ENCODE measurements at regions of chr1 and their contacts with region 1.

Region 1: GRCh38 chr1:165697881-165698760 is at the start of gene ALDH9A1:
- DNase-seq: peak; percentile 90
- H3K4me3 Mint-ChIP-seq: peak within 1 kb of the TSS; percentile 97
- H3K27ac Mint-ChIP-seq: peak within 1 kb of the TSS; percentile 80
- H3K4me1 Mint-ChIP-seq: peaks cover 11% of the 10 kb centered on the region
- H3K27me3 Mint-ChIP-seq: no peaks in the 10 kb centered on the region
- CTCF ChIP-seq: peak; percentile 40
- total RNA-seq, gene ALDH9A1: 56.3 and 67.1 TPM in 2 replicates

Region 2: GRCh38 chr1:164155347-164155746 is 1542.8 kb before region 1 on chr1:
- CTCF ChIA-PET with region 1: no interaction called
- POLR2A ChIA-PET with region 1: no interaction called
- intact Hi-C with region 1: no loop called
- DNase-seq: peak; percentile 19
- H3K4me3 Mint-ChIP-seq: no peak overlapping the region
- H3K27ac Mint-ChIP-seq: no peak overlapping the region
- H3K4me1 Mint-ChIP-seq: no peaks in the 10 kb centered on the region
- H3K27me3 Mint-ChIP-seq: no peaks in the 10 kb centered on the region
- CTCF ChIP-seq: no peak

Region 3: DNA sequence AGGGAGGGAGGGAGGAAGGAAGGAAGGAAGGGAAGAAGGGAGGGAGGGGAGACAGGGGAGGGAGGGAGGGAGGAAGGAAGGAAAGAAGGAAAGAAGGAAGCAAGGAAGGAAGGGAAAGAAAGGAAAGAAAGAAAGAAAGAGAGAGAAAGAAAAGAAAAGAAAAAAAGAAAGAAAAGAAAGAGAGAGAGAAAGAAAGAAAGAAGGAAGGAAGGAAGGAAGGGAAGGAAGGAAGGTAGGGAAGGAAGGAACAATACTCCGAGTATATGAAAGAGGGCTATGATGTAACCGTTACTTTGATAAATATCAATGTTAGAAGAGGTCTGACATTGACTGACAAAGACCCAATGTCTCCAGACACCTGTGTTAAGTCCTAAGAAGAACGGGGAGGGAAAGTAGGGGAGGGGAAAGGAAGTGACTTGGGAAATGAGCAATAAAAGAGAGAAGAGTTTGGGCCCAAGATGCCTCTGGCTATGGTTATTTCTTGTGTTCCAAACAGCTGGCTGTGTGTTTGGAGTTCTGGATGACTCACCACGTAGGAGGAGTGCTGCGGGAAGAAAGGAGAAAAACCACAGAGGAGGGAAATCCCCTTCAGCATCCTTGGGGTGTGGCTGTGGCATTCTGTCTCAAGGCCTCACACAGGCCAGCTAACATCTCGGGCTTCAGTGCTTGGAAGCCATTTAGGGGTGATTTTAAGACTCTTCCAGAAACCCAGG is 216.1 kb before region 1 on chr1:
- CTCF ChIA-PET with region 1: no interaction called
- POLR2A ChIA-PET with region 1: no interaction called
- intact Hi-C with region 1: loop called (anchors 5 kb)
- DNase-seq: peak; percentile 99
- H3K4me3 Mint-ChIP-seq: no peak overlapping the region
- H3K27ac Mint-ChIP-seq: peak overlapping the region; percentile 7
- H3K4me1 Mint-ChIP-seq: peaks cover 14% of the 10 kb centered on the region
- H3K27me3 Mint-ChIP-seq: peaks cover 43% of the 10 kb centered on the region
- CTCF ChIP-seq: no peak

Region 4: DNA sequence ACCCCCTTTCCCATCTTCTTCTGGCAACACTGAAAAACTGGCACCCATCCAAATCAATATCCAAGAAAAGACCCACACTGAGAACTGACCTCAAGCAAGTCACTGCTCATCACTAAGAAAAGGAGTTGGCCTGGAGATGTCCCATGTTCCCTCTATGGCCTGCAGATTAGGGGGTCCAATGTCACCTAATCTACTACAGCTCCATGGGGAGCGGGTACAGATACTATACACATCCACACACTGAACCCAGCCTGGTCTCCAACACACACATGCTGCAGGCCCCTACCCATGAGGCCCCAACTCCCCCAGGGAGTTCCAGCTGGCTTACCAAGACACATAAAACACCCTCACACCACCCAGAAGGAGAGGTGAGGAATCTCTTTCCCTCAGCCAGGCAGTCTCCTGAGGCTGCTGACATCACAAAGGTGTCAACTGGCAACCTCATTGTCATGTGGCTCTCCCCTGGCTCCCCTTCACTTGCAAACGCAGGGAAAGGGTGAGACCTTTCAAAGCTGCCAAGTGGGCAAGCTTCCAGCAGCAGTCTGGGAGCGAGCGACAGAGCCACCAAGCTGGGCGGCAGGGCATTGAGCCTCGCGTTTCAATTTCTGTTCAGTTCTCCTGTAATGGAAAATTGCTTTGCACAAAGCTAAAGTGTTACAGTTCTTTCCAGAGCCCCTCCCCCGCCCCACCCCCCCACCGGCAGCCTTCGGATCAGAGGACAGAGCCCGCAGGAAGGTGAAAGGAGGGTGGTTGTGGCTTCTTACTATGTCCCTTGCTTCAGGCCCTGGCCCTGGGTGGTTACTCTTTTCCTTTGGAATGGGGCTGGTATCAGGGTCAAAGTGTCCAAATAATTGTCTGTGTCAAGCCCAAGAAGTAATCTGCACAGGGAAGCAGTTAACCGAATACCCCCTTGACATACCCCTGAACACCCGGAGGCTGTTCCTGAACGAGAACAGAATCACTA is 154.3 kb before region 1 on chr1 and contains the start of gene LRRC52:
- CTCF ChIA-PET with region 1: no interaction called
- POLR2A ChIA-PET with region 1: no interaction called
- intact Hi-C with region 1: no loop called
- DNase-seq: peak; percentile 31
- H3K4me3 Mint-ChIP-seq: no peak within 1 kb of the TSS
- H3K27ac Mint-ChIP-seq: no peak within 1 kb of the TSS
- H3K4me1 Mint-ChIP-seq: no peaks in the 10 kb centered on the region
- H3K27me3 Mint-ChIP-seq: peaks cover 41% of the 10 kb centered on the region
- CTCF ChIP-seq: no peak
- total RNA-seq, gene LRRC52: not detected in 2 replicates

Region 5: GRCh38 chr1:165637427-165637826 is 60.7 kb before region 1 on chr1:
- CTCF ChIA-PET with region 1: interaction called, 14 read pairs
- POLR2A ChIA-PET with region 1: interaction called, 128 read pairs
- intact Hi-C with region 1: no loop called
- DNase-seq: peak; percentile 80
- H3K4me3 Mint-ChIP-seq: no peak overlapping the region
- H3K27ac Mint-ChIP-seq: peak overlapping the region; percentile 78
- H3K4me1 Mint-ChIP-seq: peaks cover 37% of the 10 kb centered on the region
- H3K27me3 Mint-ChIP-seq: no peaks in the 10 kb centered on the region
- CTCF ChIP-seq: no peak

Region 6: GRCh38 chr1:165659581-165659895 is 38.6 kb before region 1 on chr1:
- CTCF ChIA-PET with region 1: interaction called, 3 read pairs
- POLR2A ChIA-PET with region 1: interaction called, 11 read pairs
- intact Hi-C with region 1: no loop called
- DNase-seq: no peak
- H3K4me3 Mint-ChIP-seq: no peak overlapping the region
- H3K27ac Mint-ChIP-seq: no peak overlapping the region
- H3K4me1 Mint-ChIP-seq: no peaks in the 10 kb centered on the region
- H3K27me3 Mint-ChIP-seq: no peaks in the 10 kb centered on the region
- CTCF ChIP-seq: no peak

Region 7: DNA sequence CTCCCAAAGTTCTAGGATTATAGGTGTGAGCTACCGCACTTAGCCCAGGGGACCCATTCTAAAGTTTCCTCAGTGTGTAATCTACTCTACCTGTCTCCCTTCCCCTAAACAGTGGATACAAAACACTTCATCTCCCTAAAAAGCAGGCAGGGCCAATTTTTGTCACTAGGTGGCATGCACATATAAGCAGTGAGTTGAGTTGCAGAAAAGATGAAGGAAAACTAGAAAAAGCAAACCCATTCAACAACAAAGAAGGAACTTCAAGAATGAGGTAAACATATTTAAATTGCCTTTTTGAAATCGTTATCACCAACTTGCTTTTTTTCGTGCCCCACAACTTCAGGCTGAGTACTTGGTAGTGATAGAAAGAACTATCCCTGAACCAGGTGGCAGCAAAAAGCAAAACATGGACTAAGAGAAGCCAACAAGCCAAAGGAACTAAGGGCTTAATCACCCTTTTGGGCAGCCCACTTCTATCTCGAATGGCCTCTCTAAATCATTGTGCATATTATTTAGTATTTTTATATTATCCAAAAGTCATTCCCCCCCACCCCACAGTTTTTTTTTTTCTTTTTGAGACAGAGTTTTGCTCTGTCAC is 19.9 kb after region 1 on chr1:
- CTCF ChIA-PET with region 1: interaction called, 10 read pairs
- POLR2A ChIA-PET with region 1: interaction called, 7 read pairs
- intact Hi-C with region 1: no loop called
- DNase-seq: peak; percentile 80
- H3K4me3 Mint-ChIP-seq: no peak overlapping the region
- H3K27ac Mint-ChIP-seq: no peak overlapping the region
- H3K4me1 Mint-ChIP-seq: no peaks in the 10 kb centered on the region
- H3K27me3 Mint-ChIP-seq: no peaks in the 10 kb centered on the region
- CTCF ChIP-seq: peak; percentile 87

Region 8: DNA sequence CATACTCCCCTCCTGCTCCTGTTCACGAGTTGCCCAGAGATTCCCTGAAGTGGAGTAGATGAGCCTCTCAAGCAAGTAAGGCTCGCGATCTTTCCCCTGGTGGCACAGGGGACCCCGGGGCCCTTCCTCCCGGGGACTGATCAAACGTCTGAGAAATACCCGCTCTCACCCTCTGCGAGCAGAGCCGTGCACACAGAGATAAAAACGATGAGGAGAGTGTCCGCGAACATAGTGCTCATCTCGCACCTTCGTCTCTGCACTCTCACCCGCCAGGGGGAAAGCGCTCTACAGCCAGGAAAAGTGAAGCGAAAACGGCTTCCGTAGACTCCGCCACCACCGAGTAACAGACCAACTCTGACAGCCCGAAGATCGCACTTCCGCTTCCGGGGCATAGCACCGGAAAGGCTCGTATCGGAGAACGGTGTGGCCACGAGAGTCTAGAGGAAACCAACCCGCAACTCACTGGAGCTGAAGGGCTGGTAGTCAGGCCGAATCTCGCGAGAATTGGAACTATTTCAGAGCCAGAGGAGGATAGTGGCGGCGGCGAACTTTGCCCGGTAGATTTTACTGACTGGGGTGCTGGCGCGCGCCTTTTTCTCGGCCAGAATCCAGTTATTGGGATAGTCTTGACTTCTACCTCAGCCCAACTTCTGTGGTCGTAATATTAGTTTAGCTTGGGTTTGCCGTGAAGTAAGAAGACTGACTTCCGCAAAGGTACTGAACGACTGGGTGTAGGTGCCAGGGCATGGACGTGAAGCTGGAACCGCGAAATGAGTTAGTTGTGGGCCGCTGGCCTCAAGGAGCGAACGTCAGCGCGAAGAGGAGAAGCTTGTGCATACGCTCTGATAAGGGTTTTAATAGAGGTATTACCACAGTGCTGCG is 70.6 kb after region 1 on chr1 and contains the start of gene TMCO1:
- CTCF ChIA-PET with region 1: interaction called, 6 read pairs
- POLR2A ChIA-PET with region 1: interaction called, 51 read pairs
- intact Hi-C with region 1: loop called (anchors 2 kb)
- DNase-seq: peak; percentile 100
- H3K4me3 Mint-ChIP-seq: peak within 1 kb of the TSS; percentile 95
- H3K27ac Mint-ChIP-seq: peak within 1 kb of the TSS; percentile 98
- H3K4me1 Mint-ChIP-seq: peaks cover 46% of the 10 kb centered on the region
- H3K27me3 Mint-ChIP-seq: no peaks in the 10 kb centered on the region
- CTCF ChIP-seq: no peak
- total RNA-seq, gene TMCO1: 158 and 202 TPM in 2 replicates

Region 9: GRCh38 chr1:165898837-165899236 is 200.7 kb after region 1 on chr1:
- CTCF ChIA-PET with region 1: interaction called, 12 read pairs
- POLR2A ChIA-PET with region 1: interaction called, 24 read pairs
- intact Hi-C with region 1: no loop called
- DNase-seq: peak; percentile 73
- H3K4me3 Mint-ChIP-seq: peak overlapping the region; percentile 56
- H3K27ac Mint-ChIP-seq: peak overlapping the region; percentile 60
- H3K4me1 Mint-ChIP-seq: peaks cover 65% of the 10 kb centered on the region
- H3K27me3 Mint-ChIP-seq: no peaks in the 10 kb centered on the region
- CTCF ChIP-seq: no peak